ENCODE measurements at regions of chr2 and their contacts with region 1.

Region 1: DNA sequence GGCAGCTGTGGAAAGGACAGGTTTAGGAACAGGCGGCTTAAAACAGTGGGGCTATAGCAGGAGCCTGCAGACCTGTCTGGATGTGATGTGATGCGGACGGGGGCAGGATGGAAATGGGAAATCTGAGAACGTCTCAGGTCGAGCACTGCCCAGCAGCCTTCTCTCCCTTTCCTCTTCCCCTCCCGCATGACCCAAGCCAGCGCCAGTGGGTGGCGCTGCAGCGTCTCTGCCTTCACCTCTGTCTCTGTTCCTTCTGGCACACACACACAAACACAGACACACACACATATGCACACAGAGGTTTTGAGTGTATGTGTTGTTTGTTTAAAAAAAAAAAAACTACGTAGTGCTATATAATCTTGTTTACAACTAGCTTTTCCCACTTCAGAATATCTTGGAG is 82.0 kb upstream of the SLC66A3 start:
- DNase-seq: no peak
- ATAC-seq: peak; percentile 20
- H3K4me3 ChIP-seq: no peak overlapping the region
- H3K4me3 Mint-ChIP-seq: no peak overlapping the region
- H3K27ac ChIP-seq: no peak overlapping the region
- H3K27ac Mint-ChIP-seq: no peak overlapping the region
- H3K4me1 ChIP-seq: no peaks in the 10 kb centered on the region
- H3K4me1 Mint-ChIP-seq: peaks cover 0 to 14% (median 6%) of the 10 kb centered on the region in 7 donors
- H3K27me3 ChIP-seq: peaks cover 0 to 4% of the 10 kb centered on the region in 2 donors
- H3K27me3 Mint-ChIP-seq: peaks cover 14 to 29% (median 18%) of the 10 kb centered on the region in 5 donors

Region 2: DNA sequence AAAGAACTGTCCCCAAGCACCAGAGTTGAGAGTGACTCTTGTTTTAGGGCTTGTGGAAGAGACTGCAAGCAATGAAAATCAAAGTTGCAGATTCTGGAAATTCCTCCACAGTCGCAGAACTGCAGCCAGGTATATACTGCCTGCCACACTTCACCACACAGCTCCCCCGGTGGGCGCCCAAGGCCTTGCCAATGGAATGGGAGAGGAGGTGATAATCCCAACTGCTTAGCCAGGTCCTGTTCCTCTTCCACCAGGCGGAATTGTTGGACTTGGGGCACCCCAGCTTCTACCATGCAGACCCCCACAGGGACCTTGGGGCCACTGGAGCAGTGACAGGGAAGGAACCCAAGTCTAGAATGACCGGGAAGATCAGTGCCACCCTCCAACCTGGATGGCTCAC is 255.8 kb before region 1 on chr2:
- CTCF ChIA-PET with region 1: no interaction called
- POLR2A ChIA-PET with region 1: no interaction called
- intact Hi-C with region 1: no loop called
- DNase-seq: no peak
- ATAC-seq: no peak
- H3K4me3 ChIP-seq: no peak overlapping the region
- H3K4me3 Mint-ChIP-seq: no peak overlapping the region
- H3K27ac ChIP-seq: no peak overlapping the region
- H3K27ac Mint-ChIP-seq: no peak overlapping the region
- H3K4me1 ChIP-seq: peaks cover 0 to 2% of the 10 kb centered on the region in 2 donors
- H3K4me1 Mint-ChIP-seq: peaks cover 0 to 4% (median 0%) of the 10 kb centered on the region in 7 donors
- H3K27me3 ChIP-seq: no peaks in the 10 kb centered on the region
- H3K27me3 Mint-ChIP-seq: peaks cover 0 to 44% (median 10%) of the 10 kb centered on the region in 5 donors

Region 3: DNA sequence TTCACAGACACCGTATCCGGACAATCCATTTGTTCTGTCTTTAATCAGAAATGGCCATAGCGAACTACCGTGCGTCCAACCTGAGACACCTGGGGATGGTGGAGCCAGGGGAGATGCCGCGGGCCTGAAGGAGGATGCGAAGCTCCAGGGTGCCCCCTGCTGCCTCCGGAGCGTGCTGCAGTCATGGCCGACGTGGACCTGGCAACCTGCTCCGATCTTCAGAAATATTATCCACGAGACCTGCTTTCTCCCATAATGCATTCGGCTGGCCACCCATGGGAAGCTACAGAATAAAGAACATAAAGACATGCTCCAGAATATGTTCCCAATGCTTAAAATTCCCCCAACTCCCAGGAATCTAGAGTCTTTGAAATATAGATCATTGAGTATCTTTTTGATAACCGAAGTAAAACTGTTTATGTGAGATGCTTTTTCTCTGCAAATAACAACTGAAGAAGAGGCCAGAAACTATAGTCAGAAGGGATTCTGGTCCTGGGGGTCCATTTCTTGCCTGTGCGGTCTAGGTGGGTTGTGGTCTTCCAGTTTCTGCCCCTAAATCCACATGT is 51.3 kb after region 1 on chr2:
- CTCF ChIA-PET with region 1: no interaction called
- POLR2A ChIA-PET with region 1: no interaction called
- intact Hi-C with region 1: loop called in 1 of 2 experiments (anchors 10 kb)
- DNase-seq: peak in 8 of 9 donors; percentile 32 to 68 (median 50)
- ATAC-seq: peak; percentile 75
- H3K4me3 ChIP-seq: no peak overlapping the region
- H3K4me3 Mint-ChIP-seq: no peak overlapping the region
- H3K27ac ChIP-seq: no peak overlapping the region
- H3K27ac Mint-ChIP-seq: peak overlapping the region in 1 of 9 donors; percentile 51
- H3K4me1 ChIP-seq: peaks cover 0 to 3% of the 10 kb centered on the region in 2 donors
- H3K4me1 Mint-ChIP-seq: peaks cover 3 to 22% (median 9%) of the 10 kb centered on the region in 7 donors
- H3K27me3 ChIP-seq: no peaks in the 10 kb centered on the region
- H3K27me3 Mint-ChIP-seq: peaks cover 0 to 15% (median 0%) of the 10 kb centered on the region in 5 donors

Region 4: GRCh38 chr2:11292464-11293255 is 219.4 kb after region 1 on chr2:
- CTCF ChIA-PET with region 1: no interaction called
- POLR2A ChIA-PET with region 1: no interaction called
- intact Hi-C with region 1: no loop called
- DNase-seq: no peak
- ATAC-seq: peak; percentile 29
- H3K4me3 ChIP-seq: no peak overlapping the region
- H3K4me3 Mint-ChIP-seq: peak overlapping the region in 1 of 10 donors; percentile 12
- H3K27ac ChIP-seq: no peak overlapping the region
- H3K27ac Mint-ChIP-seq: peak overlapping the region in 1 of 9 donors; percentile 14
- H3K4me1 ChIP-seq: peaks cover 0 to 8% of the 10 kb centered on the region in 2 donors
- H3K4me1 Mint-ChIP-seq: peaks cover 6 to 60% (median 39%) of the 10 kb centered on the region in 7 donors
- H3K27me3 ChIP-seq: no peaks in the 10 kb centered on the region
- H3K27me3 Mint-ChIP-seq: no peaks in the 10 kb centered on the region

Region 5: GRCh38 chr2:11303290-11304013 is 230.2 kb after region 1 on chr2:
- CTCF ChIA-PET with region 1: no interaction called
- POLR2A ChIA-PET with region 1: no interaction called
- intact Hi-C with region 1: no loop called
- DNase-seq: no peak
- ATAC-seq: no peak
- H3K4me3 ChIP-seq: no peak overlapping the region
- H3K4me3 Mint-ChIP-seq: no peak overlapping the region
- H3K27ac ChIP-seq: no peak overlapping the region
- H3K27ac Mint-ChIP-seq: no peak overlapping the region
- H3K4me1 ChIP-seq: peaks cover 0 to 6% of the 10 kb centered on the region in 2 donors
- H3K4me1 Mint-ChIP-seq: peaks cover 0 to 39% (median 27%) of the 10 kb centered on the region in 7 donors
- H3K27me3 ChIP-seq: no peaks in the 10 kb centered on the region
- H3K27me3 Mint-ChIP-seq: no peaks in the 10 kb centered on the region

Measured in naive thymus-derived CD4-positive, alpha-beta T cell (primary cell).